ENCODE measurements at regions of chr1 and their contacts with region 1.

Region 1: DNA sequence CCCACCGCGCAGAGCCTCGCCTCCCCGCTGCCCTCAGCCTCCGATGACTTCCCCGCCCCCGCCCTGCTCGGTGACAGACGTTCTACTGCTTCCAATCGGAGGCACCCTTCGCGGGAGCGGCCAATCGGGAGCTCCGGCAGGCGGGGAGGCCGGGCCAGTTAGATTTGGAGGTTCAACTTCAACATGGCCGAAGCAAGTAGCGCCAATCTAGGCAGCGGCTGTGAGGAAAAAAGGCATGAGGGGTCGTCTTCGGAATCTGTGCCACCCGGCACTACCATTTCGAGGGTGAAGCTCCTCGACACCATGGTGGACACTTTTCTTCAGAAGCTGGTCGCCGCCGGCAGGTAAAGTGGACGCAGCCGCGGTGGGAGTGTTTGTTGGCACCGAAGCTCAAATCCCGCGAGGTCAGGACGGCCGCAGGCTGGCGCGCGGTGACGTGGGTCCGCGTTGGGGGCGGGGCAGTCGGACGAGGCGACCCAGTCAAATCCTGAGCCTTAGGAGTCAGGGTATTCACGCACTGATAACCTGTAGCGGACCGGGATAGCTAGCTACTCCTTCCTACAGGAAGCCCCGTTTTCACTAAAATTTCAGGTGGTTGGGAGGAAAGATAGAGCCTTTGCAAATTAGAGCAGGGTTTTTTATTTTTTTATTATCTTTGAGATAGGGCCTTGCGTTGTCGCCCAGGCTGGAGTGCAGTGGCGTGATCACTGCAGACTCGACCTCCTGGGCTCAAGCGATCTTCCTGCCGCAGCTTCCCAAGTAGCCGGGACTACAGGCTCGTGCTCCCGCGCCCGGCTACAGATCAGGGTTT is at the start of gene PMF1:
- DNase-seq: peak; percentile 98
- ATAC-seq: peak; percentile 97
- total RNA-seq, gene PMF1: 68.6 TPM

Region 2: GRCh38 chr1:155934097-155934935 is 278.7 kb before region 1 on chr1 and contains the start of gene KHDC4:
- intact Hi-C with region 1: no loop called
- DNase-seq: peak; percentile 97
- ATAC-seq: peak; percentile 99
- total RNA-seq, gene KHDC4: 22.0 TPM

Region 3: GRCh38 chr1:156149374-156150332 is 63.4 kb before region 1 on chr1:
- intact Hi-C with region 1: no loop called
- DNase-seq: no peak
- ATAC-seq: no peak

Region 4: GRCh38 chr1:156160743-156161171 is 52.3 kb before region 1 on chr1:
- intact Hi-C with region 1: loop called (anchors 5 kb)
- DNase-seq: peak; percentile 91
- ATAC-seq: peak; percentile 88

Region 5: DNA sequence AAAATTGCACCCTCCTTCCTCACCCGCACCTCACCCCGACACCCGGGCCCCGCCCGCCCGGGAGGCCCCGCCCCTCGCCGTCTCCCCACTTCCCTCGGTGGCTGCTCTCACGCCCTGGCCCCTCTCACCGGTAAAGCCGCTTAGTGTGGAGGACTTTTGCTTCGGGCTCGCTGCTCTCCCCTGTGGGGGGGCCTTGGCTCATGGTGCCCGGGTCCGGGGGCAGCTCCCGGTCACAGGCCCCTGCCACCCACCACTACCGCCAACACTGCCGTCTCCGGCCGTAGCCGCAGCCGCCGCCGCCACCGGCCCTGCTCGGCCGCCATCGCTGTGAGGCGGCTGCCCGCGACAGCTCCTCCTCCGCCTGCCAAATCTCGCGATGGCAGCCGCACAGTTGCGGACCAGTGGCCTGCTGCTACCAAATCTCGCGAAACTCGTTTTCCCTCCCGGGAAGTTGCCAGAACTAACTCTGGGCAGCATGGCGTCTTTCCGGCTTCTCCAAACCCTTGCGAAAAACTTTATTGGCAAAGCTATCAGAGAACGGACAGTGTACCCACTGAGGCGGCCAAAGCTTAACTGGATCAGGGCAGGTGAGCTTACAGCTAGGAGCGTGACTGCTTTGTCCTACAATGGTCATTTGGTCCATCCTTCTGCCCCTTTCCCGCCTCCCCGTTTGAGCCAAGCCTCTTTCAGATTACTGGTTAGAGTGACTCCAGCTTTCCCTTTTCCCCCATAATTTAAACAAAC is 69.6 kb after region 1 on chr1 and contains the start of gene SMG5:
- intact Hi-C with region 1: no loop called
- DNase-seq: peak; percentile 98
- ATAC-seq: peak; percentile 94
- total RNA-seq, gene SMG5: 91.6 TPM

Region 6: DNA sequence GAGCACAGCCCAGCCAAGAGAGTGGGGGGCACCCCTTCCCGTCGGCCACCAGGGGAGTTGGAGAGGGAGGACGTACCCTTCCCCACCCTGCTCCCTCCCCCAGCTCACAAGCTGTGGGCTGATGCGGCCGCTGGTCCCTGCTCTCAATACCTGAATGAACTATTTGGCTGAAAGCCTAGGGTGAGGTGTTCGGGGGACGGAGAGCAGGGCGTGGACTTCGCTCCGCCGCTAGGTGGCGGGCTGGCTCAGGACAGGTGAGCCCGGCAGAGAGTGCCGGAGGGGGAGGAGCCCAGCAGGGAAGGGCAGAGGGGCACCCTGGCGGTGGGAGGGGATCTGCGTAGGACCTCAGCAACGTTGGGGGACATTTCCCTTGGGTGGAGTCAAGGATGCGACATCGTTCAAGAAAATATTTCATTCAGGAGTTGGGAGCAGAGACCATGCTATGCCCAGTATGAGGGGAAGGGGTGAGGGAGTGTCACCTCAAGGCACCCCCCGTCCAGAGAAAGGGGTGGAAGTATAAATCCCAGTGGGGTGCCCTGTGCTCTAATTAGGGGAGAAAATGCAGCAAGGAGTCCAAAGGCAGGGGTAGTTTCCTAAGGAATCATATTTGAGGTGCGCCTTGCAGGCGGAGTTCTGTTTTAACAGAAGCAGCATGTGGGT is 144.0 kb after region 1 on chr1:
- intact Hi-C with region 1: no loop called
- DNase-seq: no peak
- ATAC-seq: peak; percentile 50